Aorta (tissue), 5 donors: ENCODE measurements at regions of chr17 and their contacts with region 1.

Region 1: GRCh38 chr17:1684378-1685189 is at the start of gene PRPF8:
- DNase-seq: peak; percentile 99
- ATAC-seq: peak; percentile 100
- H3K4me3 ChIP-seq: peak within 1 kb of the TSS; percentile 55 to 73
- H3K27ac ChIP-seq: peak within 1 kb of the TSS in 1 of 2 donors; percentile 81
- H3K4me1 ChIP-seq: peaks cover 0 to 4% of the 10 kb centered on the region in 2 donors
- H3K27me3 ChIP-seq: no peaks in the 10 kb centered on the region
- total RNA-seq, gene PRPF8: 183 to 235 TPM

Region 2: GRCh38 chr17:1546292-1546922 is 138.2 kb before region 1 on chr17:
- intact Hi-C with region 1: no loop called
- DNase-seq: no peak
- ATAC-seq: no peak
- H3K4me3 ChIP-seq: no peak overlapping the region
- H3K27ac ChIP-seq: peak overlapping the region in 1 of 2 donors; percentile 66
- H3K4me1 ChIP-seq: peaks cover 0 to 1% of the 10 kb centered on the region in 2 donors
- H3K27me3 ChIP-seq: no peaks in the 10 kb centered on the region

Region 3: GRCh38 chr17:1710807-1711553 is 26.4 kb after region 1 on chr17:
- intact Hi-C with region 1: loop called in 1 of 2 experiments (anchors 1 kb)
- DNase-seq: no peak
- ATAC-seq: no peak
- H3K4me3 ChIP-seq: no peak overlapping the region
- H3K27ac ChIP-seq: peak overlapping the region in 1 of 2 donors; percentile 45
- H3K4me1 ChIP-seq: no peaks in the 10 kb centered on the region
- H3K27me3 ChIP-seq: no peaks in the 10 kb centered on the region